ENCODE measurements at regions of chr9 and their contacts with region 1.

Region 1: DNA sequence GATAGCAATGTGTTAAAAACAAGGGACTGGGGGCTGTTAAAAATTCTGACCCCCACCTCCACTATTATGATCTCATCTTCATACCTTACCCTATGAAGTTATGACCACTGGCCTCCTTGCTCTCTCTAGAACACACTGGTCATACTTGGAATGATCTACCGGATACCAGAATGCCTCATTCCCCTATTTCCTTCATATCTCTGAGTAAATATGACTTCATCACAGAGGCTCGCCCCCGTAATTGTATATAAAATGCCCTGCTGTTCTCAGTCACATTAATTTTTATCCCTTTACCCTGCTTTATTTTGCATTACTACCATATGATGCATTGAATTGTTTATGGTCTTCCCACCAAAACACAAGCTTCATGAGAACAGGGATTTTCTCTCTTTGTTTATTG is 29.2 kb downstream of the IZUMO3 start:
- DNase-seq: no peak
- H3K4me3 ChIP-seq: no peak overlapping the region
- H3K27ac ChIP-seq: no peak overlapping the region
- H3K4me1 ChIP-seq: no peaks in the 10 kb centered on the region
- CTCF ChIP-seq: no peak

Region 2: DNA sequence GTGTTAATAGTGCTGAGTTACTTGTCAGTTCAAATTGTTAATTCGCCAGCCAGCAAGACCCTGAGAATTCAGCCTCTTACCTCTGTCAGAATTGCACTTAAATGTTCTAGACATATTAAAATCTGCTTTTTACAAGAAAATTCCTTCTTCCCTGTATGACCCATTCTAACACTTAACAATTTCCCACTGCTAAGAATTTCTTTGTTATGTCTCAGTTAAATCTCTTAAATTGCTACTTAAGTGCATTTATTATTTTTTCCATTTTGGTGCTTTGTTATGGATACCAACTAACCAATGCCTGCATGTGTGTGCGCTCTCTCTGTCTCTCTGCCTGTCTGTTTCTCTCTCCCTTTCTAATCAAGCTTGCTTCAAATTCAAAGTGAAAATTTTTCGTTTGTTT is 15.7 kb before region 1 on chr9:
- CTCF ChIA-PET with region 1: no interaction called
- POLR2A ChIA-PET with region 1: interaction called, 3 read pairs
- intact Hi-C with region 1: loop called (anchors 1 kb)
- DNase-seq: no peak
- H3K4me3 ChIP-seq: no peak overlapping the region
- H3K27ac ChIP-seq: no peak overlapping the region
- H3K4me1 ChIP-seq: no peaks in the 10 kb centered on the region
- CTCF ChIP-seq: no peak

Measured in OCI-LY7 (cell line).